Activated naive CD4-positive, alpha-beta T cell treated with anti-CD3 and anti-CD28 coated beads for 36 hours (primary cell): ENCODE measurements at regions of chr15 and their contacts with region 1.

Region 1: GRCh38 chr15:50134520-50135024 is 15.5 kb upstream of the ATP8B4 start:
- DNase-seq: no peak
- H3K4me3 Mint-ChIP-seq: peak overlapping the region; percentile 1
- H3K27ac Mint-ChIP-seq: peak overlapping the region; percentile 92
- H3K4me1 Mint-ChIP-seq: peaks cover 52% of the 10 kb centered on the region
- H3K27me3 Mint-ChIP-seq: peaks cover 4% of the 10 kb centered on the region

Region 2: DNA sequence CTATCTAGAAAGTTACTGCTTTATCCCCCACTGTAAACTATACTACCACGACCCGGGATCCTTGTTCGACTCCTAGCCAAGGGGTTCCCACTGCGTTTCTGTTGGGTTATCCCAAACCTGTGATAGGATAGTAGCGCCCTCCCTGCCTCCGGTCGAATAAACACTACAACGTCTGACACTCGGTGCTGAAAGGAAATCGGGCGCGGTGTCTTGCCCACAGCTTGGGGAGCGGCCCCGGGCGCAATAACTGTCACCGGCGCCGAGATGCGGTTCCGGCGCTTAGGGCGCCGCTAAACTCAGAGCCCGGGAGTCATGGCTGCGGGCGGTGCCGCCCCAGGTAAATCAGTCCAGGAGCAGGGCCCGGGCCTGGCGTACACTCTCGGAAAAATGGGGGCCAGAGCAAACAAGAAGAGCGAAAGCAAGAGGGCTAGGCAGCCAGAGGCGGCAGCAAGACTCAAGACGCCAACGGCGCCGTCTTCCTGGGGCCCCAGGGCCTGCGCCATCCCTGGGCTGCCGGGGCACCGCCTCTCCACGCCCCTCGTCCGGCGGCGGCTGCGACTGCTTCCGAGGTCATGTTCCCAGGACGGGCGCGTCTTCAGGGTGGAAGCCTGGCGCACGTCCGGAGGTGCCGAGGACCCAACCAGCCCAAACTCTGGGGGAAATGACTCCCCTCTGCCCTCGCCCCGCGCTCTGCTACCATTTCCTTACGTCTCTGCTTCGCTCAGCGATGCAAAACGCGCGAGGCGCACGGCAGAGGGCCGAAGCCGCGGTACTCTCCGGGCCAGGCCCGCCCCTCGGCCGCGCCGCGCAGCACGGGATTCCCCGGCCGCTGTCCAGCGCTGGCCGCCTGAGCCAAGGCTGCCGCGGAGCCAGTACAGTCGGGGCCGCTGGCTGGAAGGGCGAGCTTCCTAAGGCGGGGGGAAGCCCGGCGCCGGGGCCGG is 1803.4 kb before region 1 on chr15 and contains the start of gene DUT:
- CTCF ChIA-PET with region 1: no interaction called
- intact Hi-C with region 1: loop called (anchors 5 kb)
- DNase-seq: peak; percentile 84
- H3K4me3 Mint-ChIP-seq: peak within 1 kb of the TSS; percentile 95
- H3K27ac Mint-ChIP-seq: peak within 1 kb of the TSS; percentile 97
- H3K4me1 Mint-ChIP-seq: peaks cover 37% of the 10 kb centered on the region
- H3K27me3 Mint-ChIP-seq: no peaks in the 10 kb centered on the region
- total RNA-seq, gene DUT: 605 to 628 TPM

Region 3: DNA sequence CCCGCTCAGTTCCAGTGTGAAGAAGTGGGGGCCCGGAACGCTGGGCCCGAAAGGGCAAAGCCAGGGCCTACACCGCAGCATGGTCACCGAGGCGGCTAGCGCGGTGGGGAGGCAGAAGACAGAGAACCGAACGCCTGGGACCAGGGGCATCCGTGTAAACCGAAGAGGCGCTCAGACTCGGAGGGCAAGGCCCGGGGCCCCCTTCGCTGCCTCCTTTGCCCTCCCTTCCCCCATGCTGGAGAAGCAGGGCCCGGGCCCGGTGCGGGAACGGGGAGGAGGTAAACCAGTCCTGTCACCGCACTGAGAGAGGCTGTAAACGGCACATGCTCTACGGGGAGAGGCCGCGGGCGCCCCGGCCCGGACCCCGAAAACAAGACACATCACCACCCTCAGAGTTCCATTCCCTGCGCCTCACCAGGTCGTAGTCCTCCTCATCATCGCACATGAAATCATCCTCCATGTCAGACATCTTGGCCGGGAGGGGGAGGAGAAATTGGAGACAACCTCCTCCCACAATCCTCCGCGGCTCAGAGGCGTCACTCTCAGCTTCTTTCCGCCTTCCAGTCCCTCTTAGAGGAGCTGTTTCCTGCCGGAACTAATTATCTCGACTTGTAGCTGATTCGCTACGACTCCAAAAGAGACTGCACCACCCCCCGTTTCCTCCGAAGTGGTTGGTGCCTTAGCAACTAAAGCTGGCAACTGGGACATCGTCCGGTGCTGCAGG is 979.3 kb before region 1 on chr15 and contains the start of gene COPS2:
- CTCF ChIA-PET with region 1: no interaction called
- intact Hi-C with region 1: loop called (anchors 10 kb)
- DNase-seq: peak; percentile 97
- H3K4me3 Mint-ChIP-seq: peak within 1 kb of the TSS; percentile 98
- H3K27ac Mint-ChIP-seq: peak within 1 kb of the TSS; percentile 97
- H3K4me1 Mint-ChIP-seq: peaks cover 41% of the 10 kb centered on the region
- H3K27me3 Mint-ChIP-seq: no peaks in the 10 kb centered on the region
- total RNA-seq, gene COPS2: 79.7 to 86.4 TPM

Region 4: DNA sequence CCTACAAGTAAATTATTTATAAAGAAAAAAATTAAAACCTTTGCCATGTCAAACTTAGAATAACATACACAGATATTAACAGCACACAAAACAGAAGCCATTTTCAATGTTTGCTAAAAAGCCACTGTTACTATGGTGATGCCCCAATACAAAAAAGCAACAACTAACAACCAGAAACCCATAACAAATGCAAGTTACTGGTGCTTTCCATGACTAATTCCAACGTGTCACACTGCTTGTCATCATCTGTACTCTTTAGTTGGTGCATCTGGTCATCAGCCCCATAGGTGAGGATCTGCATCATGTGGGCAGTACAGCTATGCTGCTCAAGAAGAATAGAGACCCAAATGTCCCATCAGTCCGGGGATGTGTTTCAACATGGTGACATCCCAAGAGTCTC is 68.4 kb before region 1 on chr15:
- CTCF ChIA-PET with region 1: interaction called, 3 read pairs
- intact Hi-C with region 1: loop called (anchors 1 kb)
- DNase-seq: peak; percentile 27
- H3K4me3 Mint-ChIP-seq: no peak overlapping the region
- H3K27ac Mint-ChIP-seq: no peak overlapping the region
- H3K4me1 Mint-ChIP-seq: peaks cover 9% of the 10 kb centered on the region
- H3K27me3 Mint-ChIP-seq: peaks cover 12% of the 10 kb centered on the region

Region 5: GRCh38 chr15:50182219-50183013 is 47.8 kb after region 1 on chr15:
- CTCF ChIA-PET with region 1: no interaction called
- intact Hi-C with region 1: loop called (anchors 1 kb)
- DNase-seq: peak; percentile 73
- H3K4me3 Mint-ChIP-seq: peak overlapping the region; percentile 98
- H3K27ac Mint-ChIP-seq: peak overlapping the region; percentile 87
- H3K4me1 Mint-ChIP-seq: peaks cover 29% of the 10 kb centered on the region
- H3K27me3 Mint-ChIP-seq: peaks cover 25% of the 10 kb centered on the region

Region 6: DNA sequence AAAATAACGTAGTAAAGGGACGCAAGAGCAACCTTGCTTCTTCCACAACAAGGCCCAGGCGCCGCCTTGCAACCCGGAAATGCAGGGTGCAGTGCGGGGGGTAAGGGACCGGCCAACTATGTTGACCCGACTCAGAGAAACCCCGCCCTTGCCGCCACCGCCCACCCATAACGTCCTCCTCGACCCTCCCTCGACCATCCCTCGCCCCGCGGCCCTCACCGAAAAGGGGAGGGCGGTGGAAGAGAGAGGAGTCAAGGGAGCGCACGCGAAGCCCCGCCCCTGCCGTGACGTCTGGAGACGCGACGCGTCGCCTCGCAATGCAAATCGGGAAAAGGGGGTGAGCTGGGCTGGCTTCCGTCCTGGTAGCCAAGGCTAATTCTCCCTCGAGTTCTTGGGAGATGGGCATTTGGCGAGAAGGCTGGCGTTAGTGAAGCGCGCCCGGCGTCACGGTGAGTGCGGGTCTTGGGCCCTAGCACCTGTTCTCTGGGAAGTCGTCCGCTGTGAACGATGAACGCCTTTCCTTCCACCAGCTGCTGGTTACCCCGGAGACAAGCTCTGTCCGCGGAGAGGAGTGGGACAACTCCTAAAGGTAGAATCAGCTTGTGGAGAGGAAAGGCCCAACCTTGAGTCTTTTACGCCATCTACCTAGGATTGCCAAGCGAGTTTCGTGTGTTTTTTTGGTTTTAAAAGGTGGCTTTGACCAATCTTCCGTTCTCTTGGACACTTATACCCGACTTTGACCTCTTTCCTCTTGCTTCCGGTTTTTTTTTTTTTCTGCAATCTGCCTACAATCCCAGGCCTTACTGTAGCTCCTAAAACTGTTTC is 289.7 kb after region 1 on chr15 and contains the start of gene USP8:
- CTCF ChIA-PET with region 1: no interaction called
- intact Hi-C with region 1: loop called (anchors 1 kb)
- DNase-seq: peak; percentile 96
- H3K4me3 Mint-ChIP-seq: peak within 1 kb of the TSS; percentile 94
- H3K27ac Mint-ChIP-seq: peak within 1 kb of the TSS; percentile 92
- H3K4me1 Mint-ChIP-seq: peaks cover 30% of the 10 kb centered on the region
- H3K27me3 Mint-ChIP-seq: no peaks in the 10 kb centered on the region
- total RNA-seq, gene USP8: 31.6 TPM

Region 7: GRCh38 chr15:52018693-52019387 is 1884.3 kb after region 1 on chr15 and contains the start of gene MAPK6:
- CTCF ChIA-PET with region 1: no interaction called
- intact Hi-C with region 1: loop called (anchors 10 kb)
- DNase-seq: peak; percentile 93
- H3K4me3 Mint-ChIP-seq: peak within 1 kb of the TSS; percentile 97
- H3K27ac Mint-ChIP-seq: peak within 1 kb of the TSS; percentile 97
- H3K4me1 Mint-ChIP-seq: peaks cover 37% of the 10 kb centered on the region
- H3K27me3 Mint-ChIP-seq: no peaks in the 10 kb centered on the region
- total RNA-seq, gene MAPK6: 16.7 to 17.2 TPM